ENCODE measurements at regions of chr22 and their contacts with region 1.

Region 1: DNA sequence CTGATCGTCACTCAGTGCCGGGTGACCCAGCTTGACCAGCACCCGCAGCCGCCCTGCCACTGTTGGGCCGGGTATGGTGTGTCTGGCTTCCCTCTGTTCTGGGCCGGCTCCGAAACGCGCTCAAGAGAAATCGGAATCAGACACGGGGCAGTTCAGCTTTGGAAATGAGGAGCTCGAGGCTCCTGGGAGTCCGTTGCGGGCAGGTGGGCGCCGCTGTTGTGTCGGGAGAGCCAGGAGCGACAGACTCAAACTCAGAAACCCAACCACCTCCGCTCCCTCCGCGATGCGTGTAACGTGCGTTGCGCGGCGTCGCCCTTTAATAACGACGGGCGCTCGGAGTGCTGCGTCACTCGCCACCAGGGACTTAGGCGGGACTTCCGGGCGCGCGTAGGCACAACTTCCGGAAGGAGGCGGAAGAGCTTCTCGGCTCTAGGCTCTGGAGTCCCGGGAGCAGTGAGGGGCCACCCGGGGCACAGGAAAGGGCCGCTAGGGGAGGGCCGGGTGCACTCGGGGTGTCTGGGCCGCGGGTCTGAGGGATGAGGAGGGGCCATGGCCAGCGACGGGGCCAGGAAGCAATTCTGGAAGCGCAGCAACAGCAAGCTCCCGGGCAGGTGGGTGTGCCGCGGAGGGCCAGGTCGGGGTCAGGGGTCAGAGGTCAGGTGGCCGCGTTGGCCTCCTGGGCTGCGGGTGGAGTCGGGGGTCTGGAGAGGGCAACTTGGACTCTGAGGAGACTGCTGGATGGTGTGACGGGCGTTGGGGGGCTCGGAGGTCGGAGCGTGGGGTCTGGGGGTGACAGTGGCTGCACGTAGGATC is at the start of gene TBC1D22A:
- DNase-seq: peak; percentile 89 to 93
- ATAC-seq: peak; percentile 95 to 96
- H3K4me3 ChIP-seq: peak within 1 kb of the TSS; percentile 98
- H3K27ac ChIP-seq: peak within 1 kb of the TSS; percentile 97 to 99
- H3K4me1 ChIP-seq: peaks cover 23% of the 10 kb centered on the region
- CTCF ChIP-seq: no peak
- EP300 ChIP-seq: no peak
- POLR2A ChIP-seq: peak; percentile 95
- RAD21 ChIP-seq: no peak
- polyA plus RNA-seq, gene TBC1D22A: 10.4 and 10.8 TPM in 2 replicates

Region 2: GRCh38 chr22:46239261-46240048 is 523.0 kb before region 1 on chr22:
- CTCF ChIA-PET with region 1: no interaction called
- POLR2A ChIA-PET with region 1: no interaction called
- DNase-seq: no peak
- ATAC-seq: no peak
- H3K4me3 ChIP-seq: no peak overlapping the region
- H3K27ac ChIP-seq: no peak overlapping the region
- H3K4me1 ChIP-seq: no peaks in the 10 kb centered on the region
- CTCF ChIP-seq: no peak
- EP300 ChIP-seq: no peak
- POLR2A ChIP-seq: no peak
- RAD21 ChIP-seq: no peak

Region 3: DNA sequence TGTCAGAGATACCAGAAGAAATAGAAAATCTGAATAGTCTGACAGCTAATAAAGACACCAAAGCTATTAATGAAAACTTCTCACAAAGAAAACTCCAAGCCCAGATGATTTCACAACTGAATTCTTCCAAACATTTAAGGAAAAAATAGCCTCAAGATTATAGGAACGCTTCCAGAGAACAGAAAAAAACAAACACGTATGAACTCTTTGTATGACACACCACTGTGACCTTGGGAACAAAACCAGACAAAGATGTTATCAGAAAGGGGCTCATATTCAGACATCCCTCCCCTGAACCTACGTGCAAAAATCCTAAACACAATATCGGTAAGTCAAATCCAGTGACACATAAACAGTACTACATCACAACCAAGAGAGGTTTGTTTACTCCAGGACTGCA is 47.9 kb before region 1 on chr22:
- CTCF ChIA-PET with region 1: no interaction called
- POLR2A ChIA-PET with region 1: no interaction called
- DNase-seq: no peak
- ATAC-seq: no peak
- H3K4me3 ChIP-seq: no peak overlapping the region
- H3K27ac ChIP-seq: no peak overlapping the region
- H3K4me1 ChIP-seq: no peaks in the 10 kb centered on the region
- CTCF ChIP-seq: no peak
- EP300 ChIP-seq: no peak
- POLR2A ChIP-seq: no peak
- RAD21 ChIP-seq: no peak

Region 4: GRCh38 chr22:46748908-46749675 is 13.4 kb before region 1 on chr22:
- CTCF ChIA-PET with region 1: interaction called, 15 read pairs
- POLR2A ChIA-PET with region 1: interaction called, 16 read pairs
- DNase-seq: no peak
- ATAC-seq: no peak
- H3K4me3 ChIP-seq: no peak overlapping the region
- H3K27ac ChIP-seq: peak overlapping the region in 1 of 2 experiments; percentile 96; a peak in 1 of 6 replicates
- H3K4me1 ChIP-seq: peaks cover 32% of the 10 kb centered on the region
- CTCF ChIP-seq: no peak
- EP300 ChIP-seq: no peak
- POLR2A ChIP-seq: no peak
- RAD21 ChIP-seq: no peak

Region 5: GRCh38 chr22:46774253-46774979 is 12.0 kb after region 1 on chr22:
- CTCF ChIA-PET with region 1: interaction called, 12 read pairs
- POLR2A ChIA-PET with region 1: interaction called, 43 read pairs
- DNase-seq: no peak
- ATAC-seq: peak in 1 of 2 experiments; percentile 74; a peak in 2 of 6 replicates
- H3K4me3 ChIP-seq: peak overlapping the region; percentile 30
- H3K27ac ChIP-seq: peak overlapping the region; percentile 90 to 96
- H3K4me1 ChIP-seq: peaks cover 35% of the 10 kb centered on the region
- CTCF ChIP-seq: no peak
- EP300 ChIP-seq: no peak
- POLR2A ChIP-seq: no peak
- RAD21 ChIP-seq: no peak

Region 6: DNA sequence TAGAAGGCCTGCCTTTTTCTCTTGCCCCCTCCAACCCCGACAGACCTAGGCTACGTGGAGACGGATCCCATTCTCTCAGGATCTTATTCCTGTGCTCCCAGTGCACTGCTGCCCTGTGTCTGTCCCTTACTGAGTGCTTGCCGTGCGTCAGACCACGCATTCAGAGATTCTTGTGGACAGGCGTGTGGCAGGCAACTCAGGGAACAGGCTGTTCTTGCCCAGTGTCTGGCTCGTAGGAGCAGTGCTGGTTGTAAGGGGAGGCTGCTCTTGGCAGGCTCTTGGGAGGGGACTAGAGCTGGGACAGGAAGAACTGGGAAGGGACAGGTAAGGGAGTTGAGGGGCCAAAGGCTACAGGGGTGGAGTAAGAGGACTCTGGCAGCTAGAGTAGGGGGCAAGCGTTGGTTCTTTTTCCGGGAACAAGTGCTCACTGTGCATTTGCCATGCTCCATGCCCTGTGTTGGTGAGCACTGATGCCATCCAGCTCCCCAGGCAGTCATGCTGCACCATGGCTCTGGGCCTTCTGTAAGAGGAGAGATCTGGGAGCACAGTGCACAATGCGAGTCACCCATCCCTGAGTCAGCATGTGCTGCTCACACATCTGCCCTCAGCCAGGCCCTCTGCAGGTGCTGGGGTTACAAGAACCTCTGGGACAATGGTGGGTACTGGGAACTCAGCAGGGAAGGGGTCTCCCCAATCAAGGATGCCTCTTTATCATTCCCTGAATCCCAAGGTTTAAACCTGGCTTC is 119.1 kb after region 1 on chr22:
- CTCF ChIA-PET with region 1: no interaction called
- POLR2A ChIA-PET with region 1: no interaction called
- DNase-seq: no peak
- ATAC-seq: peak in 1 of 2 experiments; percentile 47; a peak in 2 of 6 replicates
- H3K4me3 ChIP-seq: no peak overlapping the region
- H3K27ac ChIP-seq: no peak overlapping the region
- H3K4me1 ChIP-seq: no peaks in the 10 kb centered on the region
- CTCF ChIP-seq: no peak
- EP300 ChIP-seq: no peak
- POLR2A ChIP-seq: no peak
- RAD21 ChIP-seq: no peak

Region 7: GRCh38 chr22:46894081-46894671 is 131.7 kb after region 1 on chr22:
- CTCF ChIA-PET with region 1: no interaction called
- POLR2A ChIA-PET with region 1: no interaction called
- DNase-seq: no peak
- ATAC-seq: no peak
- H3K4me3 ChIP-seq: no peak overlapping the region
- H3K27ac ChIP-seq: no peak overlapping the region
- H3K4me1 ChIP-seq: no peaks in the 10 kb centered on the region
- CTCF ChIP-seq: no peak
- EP300 ChIP-seq: no peak
- POLR2A ChIP-seq: no peak
- RAD21 ChIP-seq: no peak